CD4-positive, alpha-beta memory T cell (primary cell): ENCODE measurements at regions of chr6 and their contacts with region 1.

Region 1: DNA sequence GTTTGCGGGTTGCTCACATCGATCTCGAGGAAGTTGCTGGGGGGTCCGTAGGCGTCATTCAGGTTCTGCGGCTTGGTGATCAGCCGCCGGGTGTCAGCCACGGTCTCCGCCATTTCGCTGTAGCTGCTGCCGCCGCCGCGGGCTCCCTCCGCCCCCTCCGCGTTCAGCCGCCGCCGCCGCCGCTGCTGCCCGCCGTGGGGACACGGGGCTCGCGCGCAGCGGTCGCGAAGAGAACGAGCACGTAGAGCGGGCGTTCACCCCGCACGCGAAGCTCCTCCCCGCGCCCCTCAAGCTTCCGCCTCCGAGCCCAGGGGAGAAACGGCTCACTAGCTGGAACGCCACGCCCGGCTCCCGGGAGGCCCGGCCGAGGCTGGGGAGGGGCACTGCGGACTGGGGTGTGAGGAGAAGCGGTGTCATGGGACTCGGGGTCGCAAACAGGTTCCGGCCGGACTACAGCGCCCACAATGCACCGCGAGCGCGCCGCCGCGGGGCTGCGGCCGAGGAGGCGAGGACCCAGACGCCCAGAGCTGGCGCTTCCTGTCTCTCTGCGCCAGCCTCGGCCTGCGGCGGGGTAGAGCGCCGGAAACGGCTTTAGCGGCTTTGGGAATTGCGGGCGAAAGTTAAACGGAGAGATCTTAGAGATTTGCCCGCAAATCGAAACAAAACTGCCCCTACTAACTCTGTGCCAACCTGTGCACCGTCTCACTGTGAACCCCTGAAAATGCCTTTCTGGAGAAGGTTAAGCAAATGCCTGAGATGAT is at the start of gene SNX3:
- DNase-seq: peak; percentile 90 to 94 (median 91)
- H3K4me3 ChIP-seq: peak within 1 kb of the TSS; percentile 93 to 98
- H3K4me3 Mint-ChIP-seq: peak within 1 kb of the TSS; percentile 86 to 97 (median 92)
- H3K27ac ChIP-seq: peak within 1 kb of the TSS; percentile 84
- H3K27ac Mint-ChIP-seq: peak within 1 kb of the TSS; percentile 89 to 97 (median 95)
- H3K4me1 ChIP-seq: peaks cover 43% of the 10 kb centered on the region
- H3K4me1 Mint-ChIP-seq: peaks cover 15 to 38% (median 27%) of the 10 kb centered on the region in 4 donors
- H3K27me3 ChIP-seq: no peaks in the 10 kb centered on the region
- H3K27me3 Mint-ChIP-seq: peaks cover 0 to 2% of the 10 kb centered on the region in 2 donors
- total RNA-seq, gene SNX3: 65.9 to 66.6 TPM

Region 2: GRCh38 chr6:108074359-108075144 is 186.4 kb before region 1 on chr6 and contains the start of gene OSTM1:
- CTCF ChIA-PET with region 1: no interaction called
- POLR2A ChIA-PET with region 1: no interaction called
- intact Hi-C with region 1: loop called (anchors 1 kb)
- DNase-seq: peak; percentile 88 to 93 (median 93)
- H3K4me3 ChIP-seq: peak within 1 kb of the TSS; percentile 66 to 100
- H3K4me3 Mint-ChIP-seq: peak within 1 kb of the TSS; percentile 87 to 95 (median 90)
- H3K27ac ChIP-seq: peak within 1 kb of the TSS; percentile 78
- H3K27ac Mint-ChIP-seq: peak within 1 kb of the TSS; percentile 90 to 96 (median 94)
- H3K4me1 ChIP-seq: peaks cover 24% of the 10 kb centered on the region
- H3K4me1 Mint-ChIP-seq: peaks cover 18 to 32% (median 20%) of the 10 kb centered on the region in 4 donors
- H3K27me3 ChIP-seq: no peaks in the 10 kb centered on the region
- H3K27me3 Mint-ChIP-seq: peaks cover 0 to 5% of the 10 kb centered on the region in 2 donors
- total RNA-seq, gene OSTM1: 54.4 to 55.6 TPM

Region 3: GRCh38 chr6:108113557-108114519 is 147.2 kb before region 1 on chr6:
- CTCF ChIA-PET with region 1: no interaction called
- POLR2A ChIA-PET with region 1: no interaction called
- intact Hi-C with region 1: loop called (anchors 2 kb)
- DNase-seq: peak in 2 of 5 donors; percentile 18 to 28
- H3K4me3 ChIP-seq: peak overlapping the region in 1 of 2 donors; percentile 1
- H3K4me3 Mint-ChIP-seq: peak overlapping the region in 7 of 8 donors; percentile 57 to 95 (median 64)
- H3K27ac ChIP-seq: no peak overlapping the region
- H3K27ac Mint-ChIP-seq: no peak overlapping the region
- H3K4me1 ChIP-seq: peaks cover 48% of the 10 kb centered on the region
- H3K4me1 Mint-ChIP-seq: peaks cover 32 to 48% (median 40%) of the 10 kb centered on the region in 4 donors
- H3K27me3 ChIP-seq: peaks cover 62% of the 10 kb centered on the region
- H3K27me3 Mint-ChIP-seq: peaks cover 63 to 67% of the 10 kb centered on the region in 2 donors

Region 4: GRCh38 chr6:108200631-108201030 is 60.4 kb before region 1 on chr6:
- CTCF ChIA-PET with region 1: no interaction called
- POLR2A ChIA-PET with region 1: no interaction called
- intact Hi-C with region 1: no loop called
- DNase-seq: no peak
- H3K4me3 ChIP-seq: no peak overlapping the region
- H3K4me3 Mint-ChIP-seq: no peak overlapping the region
- H3K27ac ChIP-seq: no peak overlapping the region
- H3K27ac Mint-ChIP-seq: no peak overlapping the region
- H3K4me1 ChIP-seq: no peaks in the 10 kb centered on the region
- H3K4me1 Mint-ChIP-seq: no peaks in the 10 kb centered on the region
- H3K27me3 ChIP-seq: no peaks in the 10 kb centered on the region
- H3K27me3 Mint-ChIP-seq: peaks cover 0 to 4% of the 10 kb centered on the region in 2 donors

Region 5: GRCh38 chr6:108294727-108295625 is 34.0 kb after region 1 on chr6 and contains the start of gene AFG1L:
- CTCF ChIA-PET with region 1: interaction called, 13 read pairs
- POLR2A ChIA-PET with region 1: interaction called, 86 read pairs
- intact Hi-C with region 1: loop called (anchors 1 kb)
- DNase-seq: peak; percentile 85 to 92 (median 88)
- H3K4me3 ChIP-seq: peak within 1 kb of the TSS; percentile 68 to 98
- H3K4me3 Mint-ChIP-seq: peak within 1 kb of the TSS; percentile 96 to 99 (median 98)
- H3K27ac ChIP-seq: peak within 1 kb of the TSS; percentile 91
- H3K27ac Mint-ChIP-seq: peak within 1 kb of the TSS; percentile 91 to 100 (median 99)
- H3K4me1 ChIP-seq: peaks cover 17% of the 10 kb centered on the region
- H3K4me1 Mint-ChIP-seq: peaks cover 6 to 23% (median 15%) of the 10 kb centered on the region in 4 donors
- H3K27me3 ChIP-seq: no peaks in the 10 kb centered on the region
- H3K27me3 Mint-ChIP-seq: no peaks in the 10 kb centered on the region
- total RNA-seq, gene AFG1L: 6.3 to 6.6 TPM